Activated T-helper 2 cell treated with anti-CD3 and anti-CD28 coated beads, Interferon-gamma antibody, Interleukin-2, Interleukin-4, amounts not matched to agents 10 μg/mL and 5 μg/mL and 100 μg/mL, durations not matched to agents 14 hours and 24 hours and 36 hours (primary cell): ENCODE measurements at regions of chr10 and their contacts with region 1.

Region 1: GRCh38 chr10:9175200-9175599 is 1120.7 kb downstream of the GATA3 start:
- DNase-seq: no peak
- H3K4me3 Mint-ChIP-seq: no peak overlapping the region
- H3K27ac Mint-ChIP-seq: peak overlapping the region; percentile 79
- H3K4me1 Mint-ChIP-seq: peaks cover 18% of the 10 kb centered on the region
- H3K27me3 Mint-ChIP-seq: no peaks in the 10 kb centered on the region

Region 2: GRCh38 chr10:9137368-9137767 is 37.8 kb before region 1 on chr10:
- intact Hi-C with region 1: loop called (anchors 1 kb)
- DNase-seq: no peak
- H3K4me3 Mint-ChIP-seq: no peak overlapping the region
- H3K27ac Mint-ChIP-seq: peak overlapping the region; percentile 52
- H3K4me1 Mint-ChIP-seq: peaks cover 6% of the 10 kb centered on the region
- H3K27me3 Mint-ChIP-seq: no peaks in the 10 kb centered on the region

Region 3: GRCh38 chr10:9198611-9199010 is 23.4 kb after region 1 on chr10:
- intact Hi-C with region 1: no loop called
- DNase-seq: no peak
- H3K4me3 Mint-ChIP-seq: no peak overlapping the region
- H3K27ac Mint-ChIP-seq: no peak overlapping the region
- H3K4me1 Mint-ChIP-seq: no peaks in the 10 kb centered on the region
- H3K27me3 Mint-ChIP-seq: no peaks in the 10 kb centered on the region